Activated CD8-positive, alpha-beta T cell treated with anti-CD3 and anti-CD28 coated beads, Interleukin-2, amount 10 ng/mL, durations not matched to agents 7 days and 5 days (primary cell): ENCODE measurements at regions of chr13 and their contacts with region 1.

Region 1: GRCh38 chr13:45280751-45281634 is 60.0 kb downstream of the TPT1 start:
- DNase-seq: peak; percentile 56
- ATAC-seq: peak; percentile 70
- H3K4me3 Mint-ChIP-seq: no peak overlapping the region
- H3K27ac Mint-ChIP-seq: no peak overlapping the region
- H3K4me1 Mint-ChIP-seq: no peaks in the 10 kb centered on the region
- H3K27me3 Mint-ChIP-seq: no peaks in the 10 kb centered on the region

Region 2: DNA sequence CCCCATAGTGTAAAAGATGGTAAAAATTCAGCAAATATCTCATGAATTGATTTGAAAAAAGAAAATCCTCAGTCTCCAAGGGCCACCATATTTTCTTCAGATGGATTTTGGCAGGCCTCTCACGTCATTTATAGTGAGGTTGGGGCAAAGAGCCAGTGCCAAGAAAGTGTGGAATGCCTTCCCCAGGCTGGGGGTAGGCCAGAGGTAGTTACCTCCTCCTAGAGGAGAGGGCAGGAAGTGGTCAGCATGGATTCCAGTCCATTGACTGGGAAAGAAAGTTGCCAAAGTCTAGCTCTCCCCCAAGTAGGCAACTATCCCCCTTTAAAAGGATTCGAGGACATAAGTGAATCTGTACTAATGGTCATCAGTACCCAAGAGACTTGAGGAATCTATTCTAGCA is 11.8 kb before region 1 on chr13:
- CTCF ChIA-PET with region 1: interaction called, 10 read pairs
- POLR2A ChIA-PET with region 1: no interaction called
- DNase-seq: no peak
- ATAC-seq: no peak
- H3K4me3 Mint-ChIP-seq: no peak overlapping the region
- H3K27ac Mint-ChIP-seq: no peak overlapping the region
- H3K4me1 Mint-ChIP-seq: no peaks in the 10 kb centered on the region
- H3K27me3 Mint-ChIP-seq: no peaks in the 10 kb centered on the region

Region 3: GRCh38 chr13:45297456-45298205 is 16.6 kb after region 1 on chr13:
- CTCF ChIA-PET with region 1: interaction called, 13 read pairs
- POLR2A ChIA-PET with region 1: no interaction called
- DNase-seq: peak; percentile 40
- ATAC-seq: peak; percentile 77
- H3K4me3 Mint-ChIP-seq: no peak overlapping the region
- H3K27ac Mint-ChIP-seq: peak overlapping the region; percentile 85
- H3K4me1 Mint-ChIP-seq: peaks cover 27% of the 10 kb centered on the region
- H3K27me3 Mint-ChIP-seq: peaks cover 2% of the 10 kb centered on the region